Endothelial cell of umbilical vein (primary cell): ENCODE measurements at regions of chr12 and their contacts with region 1.

Region 1: DNA sequence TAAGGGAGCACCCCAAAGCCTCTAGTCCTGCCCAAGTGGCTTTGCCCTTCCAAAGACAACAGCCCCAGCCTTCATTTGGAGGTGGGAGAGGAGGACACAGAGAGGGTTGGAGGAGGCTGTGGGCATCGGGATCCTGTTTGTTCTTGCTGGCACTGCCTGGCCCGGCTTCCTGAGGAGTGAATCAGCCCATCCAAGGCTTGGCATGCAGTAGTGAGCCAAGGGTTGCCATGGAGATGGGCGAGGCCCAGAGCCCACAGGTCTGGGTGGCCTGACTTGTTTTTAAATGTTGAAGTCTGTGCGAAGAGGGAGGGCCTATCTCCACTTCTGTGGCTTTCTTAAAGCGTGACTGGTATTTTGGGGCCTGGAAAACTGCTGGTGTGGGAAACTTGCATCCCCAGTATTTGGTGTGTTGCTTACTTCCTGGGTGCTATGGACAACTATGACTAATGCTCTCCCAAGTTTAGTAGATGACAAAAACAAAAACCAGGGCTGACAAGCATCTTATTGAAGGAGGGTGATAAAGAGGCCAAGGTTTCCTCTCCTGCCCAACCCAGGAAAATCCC is 15.8 kb downstream of the CD9 start:
- DNase-seq: peak; percentile 92
- H3K4me3 ChIP-seq: no peak overlapping the region
- H3K27ac ChIP-seq: peak overlapping the region; percentile 68
- H3K4me1 ChIP-seq: peaks cover 69% of the 10 kb centered on the region
- H3K27me3 ChIP-seq: no peaks in the 10 kb centered on the region
- CTCF ChIP-seq: no peak
- POLR2A ChIP-seq: no peak

Region 2: DNA sequence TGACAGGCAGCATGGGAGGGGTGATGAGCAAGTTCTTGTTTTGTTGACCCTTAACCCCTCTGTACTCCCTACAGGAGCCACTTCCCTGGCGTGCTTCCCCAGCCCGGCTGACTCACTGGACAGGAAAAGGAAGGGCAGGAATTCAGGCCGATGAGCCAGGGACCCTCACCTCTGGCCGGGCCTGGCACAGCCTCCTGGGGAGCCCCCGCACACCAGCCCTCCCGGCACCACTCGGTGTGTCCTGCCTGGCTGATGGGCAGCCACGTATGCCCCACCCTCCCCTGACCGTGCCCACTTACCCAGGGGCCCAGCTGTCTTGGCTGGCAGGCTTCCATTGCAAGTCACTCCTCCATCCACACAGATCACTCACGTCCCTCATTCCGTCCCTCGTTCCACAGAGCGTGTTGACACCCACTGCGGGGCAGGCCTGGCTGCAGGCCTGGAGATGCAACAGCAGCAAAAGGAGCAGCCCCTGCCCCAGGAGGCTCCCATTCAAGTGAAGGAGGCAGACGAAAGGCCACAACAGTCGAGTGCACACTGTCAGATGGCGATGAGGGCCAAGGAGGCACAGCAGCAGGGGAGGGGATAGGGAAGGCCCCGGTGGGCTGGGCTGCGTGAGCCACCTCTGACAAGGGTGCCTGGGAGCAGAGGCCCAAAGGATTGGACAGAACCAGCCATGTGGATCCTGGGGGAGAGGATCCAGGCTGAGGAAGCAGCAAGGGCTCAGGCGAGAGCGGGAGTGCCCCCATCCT is 35.5 kb before region 1 on chr12:
- CTCF ChIA-PET with region 1: no interaction called
- POLR2A ChIA-PET with region 1: no interaction called
- dilution Hi-C with region 1: no loop called
- intact Hi-C with region 1: no loop called
- DNase-seq: peak; percentile 91
- H3K4me3 ChIP-seq: no peak overlapping the region
- H3K27ac ChIP-seq: peak overlapping the region; percentile 96
- H3K4me1 ChIP-seq: peaks cover 53% of the 10 kb centered on the region
- H3K27me3 ChIP-seq: no peaks in the 10 kb centered on the region
- CTCF ChIP-seq: no peak
- POLR2A ChIP-seq: no peak

Region 3: GRCh38 chr12:6205144-6205539 is 10.9 kb before region 1 on chr12:
- CTCF ChIA-PET with region 1: interaction called, 28 read pairs
- POLR2A ChIA-PET with region 1: interaction called, 11 read pairs
- dilution Hi-C with region 1: no loop called
- intact Hi-C with region 1: no loop called
- DNase-seq: peak; percentile 69
- H3K4me3 ChIP-seq: no peak overlapping the region
- H3K27ac ChIP-seq: peak overlapping the region; percentile 85
- H3K4me1 ChIP-seq: peaks cover 48% of the 10 kb centered on the region
- H3K27me3 ChIP-seq: no peaks in the 10 kb centered on the region
- CTCF ChIP-seq: no peak
- POLR2A ChIP-seq: peak; percentile 39

Region 4: DNA sequence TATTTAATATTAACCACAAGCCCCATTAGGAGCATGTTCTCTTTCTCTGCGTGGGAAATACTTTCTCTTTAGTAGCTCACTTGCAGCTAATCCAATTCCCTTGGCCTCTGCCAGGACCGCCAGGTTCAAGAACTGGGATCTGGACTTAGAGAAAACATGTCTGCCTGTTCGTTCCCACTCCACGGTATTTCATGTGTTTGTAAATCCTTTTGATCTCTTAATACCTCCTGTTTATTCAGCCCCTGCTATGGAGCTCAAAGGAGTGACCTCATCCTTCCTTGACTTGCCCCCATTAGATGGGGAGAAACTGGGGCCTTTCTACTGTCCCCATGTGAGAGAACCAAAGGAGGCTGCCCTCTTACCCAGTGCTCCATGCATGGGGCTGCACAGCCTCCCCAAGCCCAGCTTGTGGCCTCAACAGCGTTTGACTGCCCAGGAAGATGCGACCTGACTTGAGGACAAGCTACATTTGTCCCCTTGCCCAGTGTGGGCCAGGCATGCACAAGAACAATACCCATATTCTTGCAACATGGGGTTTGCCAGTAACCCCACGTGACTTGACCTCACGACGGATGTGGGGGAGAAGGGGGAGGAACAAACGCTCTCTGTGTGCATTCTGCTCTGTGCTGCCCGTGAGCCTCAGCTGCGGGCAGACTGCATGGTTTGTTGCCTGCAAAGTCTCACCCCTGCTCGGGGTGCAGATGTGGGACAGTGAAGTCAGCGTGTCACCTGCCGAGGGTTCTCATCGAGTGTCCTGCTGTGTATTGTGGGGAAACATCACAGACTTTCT is 14.5 kb after region 1 on chr12:
- CTCF ChIA-PET with region 1: interaction called, 7 read pairs
- POLR2A ChIA-PET with region 1: no interaction called
- dilution Hi-C with region 1: no loop called
- intact Hi-C with region 1: loop called (anchors 2 kb)
- DNase-seq: no peak
- H3K4me3 ChIP-seq: no peak overlapping the region
- H3K27ac ChIP-seq: peak overlapping the region; percentile 42
- H3K4me1 ChIP-seq: peaks cover 74% of the 10 kb centered on the region
- H3K27me3 ChIP-seq: no peaks in the 10 kb centered on the region
- CTCF ChIP-seq: no peak
- POLR2A ChIP-seq: peak; percentile 2

Region 5: DNA sequence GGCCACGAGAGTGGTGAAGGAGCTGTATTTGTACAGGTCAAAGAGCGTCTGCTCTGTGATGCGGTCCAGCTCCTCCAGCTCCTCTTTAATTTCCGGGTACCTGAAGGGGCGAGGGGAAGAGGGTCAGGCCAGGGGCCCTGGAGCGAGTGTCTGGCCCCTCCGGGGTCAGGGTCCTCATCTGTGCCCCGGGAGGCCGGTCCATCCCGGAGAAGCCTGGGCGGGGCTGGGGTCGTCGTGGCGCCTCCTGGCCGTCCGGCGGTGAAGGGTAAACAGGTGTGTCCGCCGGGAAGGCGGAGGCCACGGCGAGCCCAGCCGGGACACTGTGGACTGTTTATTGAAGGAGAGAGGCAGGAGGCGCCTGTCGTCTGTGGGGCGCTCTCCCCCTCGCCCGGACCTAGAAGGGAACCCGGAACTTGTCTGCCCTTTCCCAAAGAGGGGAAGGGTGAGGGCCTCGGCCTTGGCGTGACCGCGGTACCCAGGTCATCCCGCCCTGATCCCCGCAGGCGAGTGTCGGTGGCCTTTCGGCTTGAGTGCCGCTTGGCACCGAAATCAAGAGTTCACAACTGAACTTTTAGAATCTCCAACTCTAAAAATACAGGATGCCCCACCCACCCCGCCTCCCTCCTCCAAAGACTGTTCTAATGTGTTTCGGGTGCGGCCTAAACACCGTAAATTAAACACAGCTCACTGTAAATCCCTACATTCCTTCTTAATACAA is 147.8 kb after region 1 on chr12:
- CTCF ChIA-PET with region 1: no interaction called
- POLR2A ChIA-PET with region 1: no interaction called
- dilution Hi-C with region 1: no loop called
- intact Hi-C with region 1: no loop called
- DNase-seq: no peak
- H3K4me3 ChIP-seq: peak overlapping the region; percentile 36 to 46 (median 41)
- H3K27ac ChIP-seq: peak overlapping the region; percentile 4
- H3K4me1 ChIP-seq: peaks cover 25% of the 10 kb centered on the region
- H3K27me3 ChIP-seq: no peaks in the 10 kb centered on the region
- CTCF ChIP-seq: no peak
- POLR2A ChIP-seq: no peak